Activated CD4-positive, alpha-beta memory T cell treated with anti-CD3 and anti-CD28 coated beads, Interleukin-2, amount 10 ng/mL, durations not matched to agents 7 days and 5 days (primary cell): ENCODE measurements at regions of chr19 and their contacts with region 1.

Region 1: DNA sequence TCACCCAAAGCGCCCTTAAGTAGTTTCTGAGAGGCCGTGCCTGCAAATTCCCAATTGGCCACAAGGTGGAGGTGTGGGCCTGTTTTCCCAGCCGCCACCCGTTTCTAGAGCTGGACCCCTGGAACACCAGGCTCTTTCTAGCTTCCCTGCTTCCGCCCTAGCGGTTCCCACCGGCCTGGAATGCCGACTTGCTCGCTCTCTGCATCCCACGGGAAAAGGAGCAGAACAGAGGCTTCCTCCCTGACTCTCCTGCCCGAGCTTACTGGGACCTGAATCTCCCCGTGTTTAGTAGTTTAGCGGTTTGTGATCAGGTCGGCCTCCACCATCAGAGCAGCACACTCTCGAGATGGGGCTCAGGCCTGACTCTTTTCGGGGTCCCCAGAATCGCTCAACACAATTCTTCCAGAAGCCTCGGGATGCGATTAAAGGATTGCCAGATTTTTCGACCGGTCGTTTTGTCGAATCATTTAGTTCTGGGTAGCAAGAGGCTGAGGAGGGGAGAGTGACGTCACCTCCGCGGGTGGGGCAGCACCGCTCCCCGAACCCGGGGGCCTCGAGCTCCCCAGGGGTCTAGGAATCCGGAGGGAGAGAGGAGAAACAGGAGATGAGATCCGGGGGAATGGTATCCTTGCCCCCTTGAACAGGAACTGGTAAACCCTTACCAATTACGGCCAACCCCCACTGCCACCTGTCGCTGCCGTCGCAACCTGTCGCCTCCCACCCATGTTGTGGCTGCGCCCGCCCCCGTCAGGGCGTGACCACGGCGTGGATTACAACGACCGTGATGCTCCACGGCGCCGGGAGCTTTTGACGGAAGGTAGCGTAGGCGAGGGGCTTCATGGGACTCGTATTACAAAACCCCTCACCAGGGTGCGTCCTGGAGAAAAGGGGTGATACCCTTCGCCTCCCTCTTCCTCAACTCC is 8.0 kb downstream of the NAPSA start:
- DNase-seq: peak; percentile 89
- H3K4me3 Mint-ChIP-seq: peak overlapping the region; percentile 86
- H3K27ac Mint-ChIP-seq: peak overlapping the region; percentile 94
- H3K4me1 Mint-ChIP-seq: peaks cover 44% of the 10 kb centered on the region
- H3K27me3 Mint-ChIP-seq: no peaks in the 10 kb centered on the region

Region 2: DNA sequence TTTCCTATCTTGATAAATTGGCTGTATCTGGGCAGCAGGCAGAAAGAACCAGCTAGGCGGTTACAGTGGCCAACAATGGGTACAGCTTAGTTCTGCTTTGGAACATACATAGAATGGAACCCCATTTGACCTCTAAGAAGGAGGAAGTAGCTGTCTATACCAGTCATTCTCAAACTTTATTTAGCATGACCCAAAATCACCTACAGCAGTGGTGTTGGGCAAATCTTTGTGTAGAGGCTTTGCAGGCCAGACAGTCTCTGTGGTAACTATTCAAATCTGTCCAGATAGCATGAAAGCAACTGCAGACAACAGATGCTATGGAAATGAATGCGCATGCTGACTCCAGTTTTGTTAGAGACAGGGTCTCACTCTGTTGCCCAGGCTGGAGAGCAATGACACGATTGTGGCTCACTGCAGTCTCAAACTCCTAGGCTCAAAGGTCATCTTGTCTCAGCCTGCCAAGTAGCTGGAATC is 16.3 kb before region 1 on chr19:
- CTCF ChIA-PET with region 1: interaction called, 18 read pairs
- POLR2A ChIA-PET with region 1: interaction called, 12 read pairs
- DNase-seq: no peak
- H3K4me3 Mint-ChIP-seq: no peak overlapping the region
- H3K27ac Mint-ChIP-seq: no peak overlapping the region
- H3K4me1 Mint-ChIP-seq: peaks cover 21% of the 10 kb centered on the region
- H3K27me3 Mint-ChIP-seq: no peaks in the 10 kb centered on the region

Region 3: GRCh38 chr19:50376166-50377050 is 19.0 kb after region 1 on chr19 and contains the start of gene NR1H2:
- CTCF ChIA-PET with region 1: interaction called, 21 read pairs
- POLR2A ChIA-PET with region 1: interaction called, 18 read pairs
- DNase-seq: peak; percentile 94
- H3K4me3 Mint-ChIP-seq: peak within 1 kb of the TSS; percentile 88
- H3K27ac Mint-ChIP-seq: peak within 1 kb of the TSS; percentile 97
- H3K4me1 Mint-ChIP-seq: peaks cover 31% of the 10 kb centered on the region
- H3K27me3 Mint-ChIP-seq: no peaks in the 10 kb centered on the region
- total RNA-seq, gene NR1H2: 79.7 to 86.2 TPM

Region 4: DNA sequence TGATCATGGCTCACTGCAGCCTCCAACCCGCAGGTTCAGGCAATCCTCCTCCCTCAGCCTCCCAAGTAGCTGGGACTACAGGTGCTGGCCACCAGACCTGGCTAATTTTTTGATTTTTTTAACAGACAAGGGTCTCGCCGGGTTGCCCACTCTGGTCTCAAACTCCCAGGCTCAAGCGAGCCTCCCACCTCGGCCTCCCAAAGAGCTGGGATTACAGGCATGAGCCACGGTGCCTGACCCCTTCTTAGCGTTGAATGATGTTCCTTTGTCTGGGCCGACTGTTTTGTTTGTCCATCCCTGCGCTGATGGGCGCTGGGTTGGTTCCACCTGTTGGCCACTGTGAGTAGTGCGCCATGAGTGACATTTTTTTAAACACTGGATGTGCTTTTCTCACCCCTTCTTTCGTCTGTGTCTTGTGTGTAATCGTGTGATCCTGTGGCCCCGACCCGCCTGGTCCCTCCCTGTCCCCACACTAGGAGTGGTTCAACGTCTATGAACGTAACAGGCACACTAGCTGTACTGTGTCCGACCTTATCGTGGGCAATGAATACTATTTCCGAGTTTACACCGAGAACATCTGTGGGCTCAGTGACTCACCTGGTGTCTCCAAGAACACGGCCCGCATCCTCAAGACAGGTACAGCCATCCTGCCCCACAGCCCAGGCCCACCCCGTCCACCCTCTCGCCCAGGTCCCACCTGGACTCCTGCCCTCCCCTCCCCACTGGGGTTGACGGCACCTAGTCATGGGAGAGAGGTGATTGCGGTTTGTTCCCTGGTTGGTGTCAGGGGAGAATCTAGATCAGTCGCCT is 103.8 kb after region 1 on chr19:
- CTCF ChIA-PET with region 1: interaction called, 20 read pairs
- POLR2A ChIA-PET with region 1: no interaction called
- DNase-seq: peak; percentile 74
- H3K4me3 Mint-ChIP-seq: no peak overlapping the region
- H3K27ac Mint-ChIP-seq: no peak overlapping the region
- H3K4me1 Mint-ChIP-seq: peaks cover 16% of the 10 kb centered on the region
- H3K27me3 Mint-ChIP-seq: peaks cover 16% of the 10 kb centered on the region